Panc1 (cell line): ENCODE measurements at regions of chr1 and their contacts with region 1.

Region 1: GRCh38 chr1:57451516-57451915 is 27.7 kb upstream of the DAB1 start:
- DNase-seq: no peak
- ATAC-seq: no peak
- H3K4me3 ChIP-seq: no peak overlapping the region
- H3K27ac ChIP-seq: no peak overlapping the region
- H3K4me1 ChIP-seq: no peaks in the 10 kb centered on the region
- H3K27me3 ChIP-seq: peaks cover 4% of the 10 kb centered on the region
- CTCF ChIP-seq: no peak

Region 2: DNA sequence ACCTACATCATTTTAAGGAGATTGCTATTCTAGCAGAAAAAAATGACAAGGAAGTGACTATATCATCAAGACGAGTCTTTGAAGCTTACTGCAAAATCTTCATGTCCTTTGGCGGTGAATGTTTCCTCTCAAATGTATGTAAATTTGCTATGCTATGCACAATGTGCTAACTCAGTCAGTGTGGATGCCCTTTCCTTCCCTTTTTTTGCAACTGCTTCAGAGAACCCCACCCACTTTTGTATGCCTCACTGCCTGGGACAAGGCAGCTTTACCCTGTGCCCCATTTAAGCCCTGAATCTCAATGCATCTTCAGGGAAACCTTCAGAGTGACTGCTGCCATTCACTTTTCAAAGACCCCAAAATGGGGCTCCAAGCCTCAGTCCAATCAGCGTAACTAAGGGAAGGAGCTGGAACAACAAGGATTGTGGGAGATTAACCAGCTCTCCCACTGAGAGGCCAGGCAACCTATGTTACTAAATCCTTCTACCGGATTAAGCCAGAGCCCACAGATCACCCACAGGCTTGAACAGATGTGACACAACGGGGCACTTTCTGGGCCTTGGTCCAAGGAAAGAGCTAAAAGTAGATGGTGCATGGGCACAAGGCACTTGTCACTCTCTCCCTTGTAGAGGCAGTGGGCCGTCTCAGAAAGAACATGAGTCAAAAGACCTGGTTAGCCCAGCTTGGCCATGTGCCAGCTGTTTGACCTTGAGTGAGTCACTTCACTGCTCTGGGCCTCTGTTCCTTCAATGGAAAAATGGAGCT is 1026.6 kb before region 1 on chr1:
- CTCF ChIA-PET with region 1: no interaction called
- POLR2A ChIA-PET with region 1: no interaction called
- in situ Hi-C with region 1: no loop called
- intact Hi-C with region 1: no loop called
- DNase-seq: no peak
- ATAC-seq: no peak
- H3K4me3 ChIP-seq: no peak overlapping the region
- H3K27ac ChIP-seq: no peak overlapping the region
- H3K4me1 ChIP-seq: no peaks in the 10 kb centered on the region
- H3K27me3 ChIP-seq: no peaks in the 10 kb centered on the region
- CTCF ChIP-seq: no peak

Region 3: GRCh38 chr1:57350610-57351009 is 100.9 kb before region 1 on chr1:
- CTCF ChIA-PET with region 1: no interaction called
- POLR2A ChIA-PET with region 1: interaction called, 14 read pairs
- in situ Hi-C with region 1: no loop called
- intact Hi-C with region 1: no loop called
- DNase-seq: no peak
- ATAC-seq: no peak
- H3K4me3 ChIP-seq: no peak overlapping the region
- H3K27ac ChIP-seq: no peak overlapping the region
- H3K4me1 ChIP-seq: no peaks in the 10 kb centered on the region
- H3K27me3 ChIP-seq: peaks cover 2% of the 10 kb centered on the region; the same call in 1 of the 2 replicates
- CTCF ChIP-seq: no peak